ENCODE measurements at regions of chr15 and their contacts with region 1.

Region 1: DNA sequence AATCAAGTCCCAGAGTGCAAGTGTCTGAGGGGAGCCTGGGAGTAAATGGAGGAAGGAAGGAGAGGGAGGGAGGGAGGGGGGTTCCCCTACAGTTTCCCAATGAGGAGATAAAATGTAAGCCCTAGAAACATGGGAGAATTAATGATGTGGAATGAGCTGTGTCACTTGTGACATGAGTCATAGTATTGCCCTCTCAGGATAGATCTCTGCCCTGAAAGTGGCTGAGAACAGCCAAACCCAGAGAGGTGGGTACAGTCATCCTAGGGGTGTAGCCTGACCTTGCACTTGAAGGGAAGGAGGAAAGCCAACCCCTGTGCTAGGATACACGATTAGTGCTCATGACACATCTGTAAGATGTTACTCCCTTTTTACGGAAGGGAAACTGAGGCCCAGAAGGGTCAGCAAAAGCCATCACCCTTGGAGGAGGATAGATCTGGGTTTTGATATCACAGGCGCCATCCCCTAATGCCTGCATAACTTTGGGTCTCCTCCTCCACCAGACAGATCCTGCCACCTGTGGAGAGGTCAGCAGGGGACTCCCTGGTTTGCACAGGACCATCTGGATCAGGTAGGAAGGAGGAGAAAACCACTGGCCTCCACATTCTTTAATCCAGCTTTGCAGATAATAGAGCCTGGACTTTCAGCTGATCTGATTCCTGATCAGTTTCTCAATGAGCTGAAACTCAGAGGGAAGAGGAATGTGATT is 23.1 kb upstream of the USP3 start:
- DNase-seq: peak; percentile 68
- ATAC-seq: peak; percentile 71
- H3K4me3 Mint-ChIP-seq: no peak overlapping the region
- H3K27ac Mint-ChIP-seq: peak overlapping the region; percentile 88
- H3K4me1 Mint-ChIP-seq: peaks cover 84% of the 10 kb centered on the region
- H3K27me3 Mint-ChIP-seq: no peaks in the 10 kb centered on the region

Region 2: DNA sequence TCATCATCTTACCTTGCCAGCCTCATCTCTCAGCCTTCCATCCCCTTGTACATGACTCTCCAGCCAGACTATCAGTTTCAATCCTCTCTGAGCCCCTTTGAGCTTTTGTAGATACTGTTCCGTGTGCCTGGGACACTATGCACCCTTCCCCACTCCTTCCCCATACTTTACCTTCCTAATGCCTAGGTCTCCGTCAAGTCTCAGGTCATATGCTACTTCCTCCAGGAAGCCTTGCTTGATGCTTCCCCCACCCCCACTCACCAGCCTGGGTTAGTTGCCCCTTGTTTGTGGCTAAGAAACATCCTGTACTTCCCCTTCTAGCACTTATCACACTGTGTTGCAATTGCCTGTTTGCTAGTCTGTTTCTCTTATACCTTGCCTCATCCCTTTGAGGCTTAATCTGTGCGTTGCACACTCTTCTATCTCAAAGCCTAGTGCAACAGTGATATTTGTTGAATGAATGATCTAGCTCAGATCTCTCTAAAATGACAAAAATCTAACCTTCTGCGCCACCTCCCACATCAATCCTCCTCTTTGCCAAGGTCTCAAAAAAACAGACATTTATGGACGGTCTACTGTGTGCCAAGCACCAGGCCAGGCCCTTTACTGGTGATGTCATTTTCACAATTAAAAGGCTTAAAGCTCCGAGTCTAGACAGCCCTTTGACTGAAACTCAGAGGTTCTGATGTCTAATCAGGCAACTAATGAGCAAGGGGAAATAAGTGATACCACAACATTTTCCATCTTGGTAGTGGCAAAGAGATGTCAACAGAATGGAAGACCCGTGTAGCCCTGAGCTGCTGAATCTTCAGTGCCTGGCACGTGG is 16.6 kb after region 1 on chr15:
- CTCF ChIA-PET with region 1: interaction called, 78 read pairs
- POLR2A ChIA-PET with region 1: interaction called, 9 read pairs
- intact Hi-C with region 1: loop called (anchors 1 to 2 kb)
- DNase-seq: peak; percentile 71
- ATAC-seq: peak; percentile 56
- H3K4me3 Mint-ChIP-seq: no peak overlapping the region
- H3K27ac Mint-ChIP-seq: no peak overlapping the region
- H3K4me1 Mint-ChIP-seq: peaks cover 74% of the 10 kb centered on the region
- H3K27me3 Mint-ChIP-seq: no peaks in the 10 kb centered on the region

Region 3: DNA sequence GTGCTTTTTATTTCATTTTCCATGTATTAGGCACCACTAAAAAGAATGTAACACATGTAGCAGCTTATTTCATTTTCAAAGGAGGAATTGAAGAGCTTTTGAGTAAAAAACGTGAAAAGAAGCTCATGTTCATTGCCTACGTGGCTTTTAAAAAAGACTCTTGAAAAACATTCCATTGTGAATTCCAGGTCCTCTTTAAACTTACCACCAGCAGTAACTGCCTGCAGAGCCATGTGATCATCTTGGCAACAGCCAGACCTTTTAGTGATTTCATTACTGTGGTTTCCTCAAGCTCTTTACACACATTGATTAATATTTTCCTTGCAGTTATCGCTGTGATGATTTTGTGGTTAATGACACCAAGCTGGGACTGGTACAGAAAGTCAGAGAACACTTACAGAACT is 72.1 kb after region 1 on chr15:
- CTCF ChIA-PET with region 1: interaction called, 7 read pairs
- POLR2A ChIA-PET with region 1: interaction called, 4 read pairs
- intact Hi-C with region 1: loop called in 1 of 2 experiments (anchors 2 kb)
- DNase-seq: peak; percentile 30
- ATAC-seq: peak; percentile 72
- H3K4me3 Mint-ChIP-seq: peak overlapping the region; percentile 35
- H3K27ac Mint-ChIP-seq: peak overlapping the region; percentile 51
- H3K4me1 Mint-ChIP-seq: peaks cover 50% of the 10 kb centered on the region
- H3K27me3 Mint-ChIP-seq: no peaks in the 10 kb centered on the region

Region 4: DNA sequence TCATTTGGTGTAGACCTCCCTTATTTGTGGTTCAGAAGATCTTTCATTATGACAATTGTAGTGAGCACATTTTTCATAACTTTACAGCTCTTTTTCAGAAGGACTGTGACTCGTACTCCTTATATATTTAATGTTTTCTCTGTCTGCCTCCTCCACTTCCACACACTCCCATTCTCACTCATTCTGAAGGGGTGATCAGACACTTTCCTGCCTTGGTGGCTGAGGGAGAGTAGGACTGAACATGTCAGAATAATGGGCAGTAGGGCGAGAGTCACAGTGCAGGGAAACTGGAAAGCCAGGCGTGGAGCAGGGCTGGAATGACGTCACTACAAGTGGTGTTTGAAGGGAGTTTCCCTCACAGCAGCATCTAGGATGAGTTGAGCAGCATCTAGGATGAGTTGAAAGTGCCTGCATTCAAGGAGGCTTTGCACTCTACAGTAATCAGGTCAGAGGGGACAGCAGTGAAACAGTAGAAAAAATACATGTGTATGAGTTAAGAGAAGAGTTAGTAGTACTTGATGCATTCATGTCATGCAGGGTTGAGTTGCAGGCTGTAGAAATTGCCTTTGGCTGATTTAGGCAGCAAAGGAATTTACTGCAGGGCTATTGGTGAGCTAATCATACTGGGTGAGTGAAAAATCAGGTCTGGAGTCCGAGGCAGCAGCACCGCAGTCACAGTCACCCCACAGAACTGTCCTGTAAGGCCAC is 79.6 kb after region 1 on chr15:
- CTCF ChIA-PET with region 1: interaction called, 3 read pairs
- POLR2A ChIA-PET with region 1: interaction called, 4 read pairs
- intact Hi-C with region 1: loop called (anchors 1 to 2 kb)
- DNase-seq: peak; percentile 81
- ATAC-seq: peak; percentile 95
- H3K4me3 Mint-ChIP-seq: no peak overlapping the region
- H3K27ac Mint-ChIP-seq: peak overlapping the region; percentile 74
- H3K4me1 Mint-ChIP-seq: peaks cover 49% of the 10 kb centered on the region
- H3K27me3 Mint-ChIP-seq: no peaks in the 10 kb centered on the region

Region 5: GRCh38 chr15:63600616-63601025 is 119.4 kb after region 1 on chr15:
- CTCF ChIA-PET with region 1: interaction called, 3 read pairs
- POLR2A ChIA-PET with region 1: interaction called, 4 read pairs
- intact Hi-C with region 1: loop called in 1 of 2 experiments (anchors 5 kb)
- DNase-seq: peak; percentile 95
- ATAC-seq: peak; percentile 74
- H3K4me3 Mint-ChIP-seq: peak overlapping the region; percentile 88
- H3K27ac Mint-ChIP-seq: peak overlapping the region; percentile 96
- H3K4me1 Mint-ChIP-seq: peaks cover 54% of the 10 kb centered on the region
- H3K27me3 Mint-ChIP-seq: no peaks in the 10 kb centered on the region

Measured in activated CD4-positive, alpha-beta T cell treated with anti-CD3 and anti-CD28 coated beads for 36 hours (primary cell).